IMR-90 (cell line): ENCODE measurements at regions of chr12 and their contacts with region 1.

Region 1: GRCh38 chr12:16385782-16386646 is 38.6 kb downstream of the MGST1 start:
- DNase-seq: peak; percentile 70
- ATAC-seq: peak; percentile 93
- H3K4me3 ChIP-seq: no peak overlapping the region
- H3K27ac ChIP-seq: no peak overlapping the region
- H3K4me1 ChIP-seq: peaks cover 2% of the 10 kb centered on the region; the same call in 1 of the 2 replicates
- H3K27me3 ChIP-seq: no peaks in the 10 kb centered on the region
- CTCF ChIP-seq: peak; percentile 67
- POLR2A ChIP-seq: no peak
- RAD21 ChIP-seq: peak; percentile 74

Region 2: GRCh38 chr12:16685107-16685506 is 299.1 kb after region 1 on chr12:
- CTCF ChIA-PET with region 1: no interaction called
- POLR2A ChIA-PET with region 1: no interaction called
- dilution Hi-C with region 1: no loop called
- in situ Hi-C with region 1: no loop called
- intact Hi-C with region 1: loop called (anchors 1 kb)
- DNase-seq: peak; percentile 1
- ATAC-seq: no peak
- H3K4me3 ChIP-seq: no peak overlapping the region
- H3K27ac ChIP-seq: no peak overlapping the region
- H3K4me1 ChIP-seq: no peaks in the 10 kb centered on the region
- H3K27me3 ChIP-seq: no peaks in the 10 kb centered on the region
- CTCF ChIP-seq: peak; percentile 33
- POLR2A ChIP-seq: no peak
- RAD21 ChIP-seq: peak; percentile 29